ENCODE measurements at regions of chr20 and their contacts with region 1.

Region 1: GRCh38 chr20:3156811-3157619 is 2.6 kb downstream of the FASTKD5 start:
- DNase-seq: peak; percentile 39
- ATAC-seq: peak; percentile 88
- H3K4me3 Mint-ChIP-seq: peak overlapping the region; percentile 94
- H3K27ac Mint-ChIP-seq: peak overlapping the region; percentile 88
- H3K4me1 Mint-ChIP-seq: peaks cover 50% of the 10 kb centered on the region
- H3K27me3 Mint-ChIP-seq: no peaks in the 10 kb centered on the region
- CTCF ChIP-seq: no peak

Region 2: GRCh38 chr20:3173610-3174441 is 16.8 kb after region 1 on chr20:
- CTCF ChIA-PET with region 1: interaction called, 4 read pairs
- POLR2A ChIA-PET with region 1: interaction called, 25 read pairs
- intact Hi-C with region 1: no loop called
- DNase-seq: peak; percentile 90
- ATAC-seq: peak; percentile 31
- H3K4me3 Mint-ChIP-seq: peak overlapping the region; percentile 81
- H3K27ac Mint-ChIP-seq: no peak overlapping the region
- H3K4me1 Mint-ChIP-seq: peaks cover 13% of the 10 kb centered on the region
- H3K27me3 Mint-ChIP-seq: peaks cover 17% of the 10 kb centered on the region
- CTCF ChIP-seq: peak; percentile 17

Measured in activated CD8-positive, alpha-beta T cell treated with anti-CD3 and anti-CD28 coated beads for 36 hours (primary cell).